Activated T-helper 1 cell treated with anti-CD3 and anti-CD28 coated beads, Interleukin-12 subunit alpha, Interleukin-12 subunit beta, Interleukin-2, Interleukin-4 antibody, amounts not matched to agents 30 ng/mL and 10 ng/mL and 1 ng/mL, durations not matched to agents 14 hours and 24 hours and 36 hours (primary cell): ENCODE measurements at regions of chr11 and their contacts with region 1.

Region 1: GRCh38 chr11:94543695-94544645 is at the start of gene FUT4:
- DNase-seq: peak; percentile 70
- H3K4me3 Mint-ChIP-seq: peak within 1 kb of the TSS; percentile 98
- H3K27ac Mint-ChIP-seq: peak within 1 kb of the TSS; percentile 99
- H3K4me1 Mint-ChIP-seq: peaks cover 45% of the 10 kb centered on the region
- H3K27me3 Mint-ChIP-seq: peaks cover 5% of the 10 kb centered on the region
- total RNA-seq, gene FUT4: 8.0 and 8.6 TPM in 2 replicates

Region 2: GRCh38 chr11:93197380-93198214 is 1346.4 kb before region 1 on chr11 and contains the start of gene SLC36A4:
- intact Hi-C with region 1: loop called (anchors 5 kb)
- DNase-seq: peak; percentile 80
- H3K4me3 Mint-ChIP-seq: peak within 1 kb of the TSS; percentile 97
- H3K27ac Mint-ChIP-seq: peak within 1 kb of the TSS; percentile 97
- H3K4me1 Mint-ChIP-seq: peaks cover 13% of the 10 kb centered on the region
- H3K27me3 Mint-ChIP-seq: peaks cover 13% of the 10 kb centered on the region
- total RNA-seq, gene SLC36A4: 16.9 and 17.1 TPM in 2 replicates

Region 3: GRCh38 chr11:93741094-93741881 is 802.7 kb before region 1 on chr11 and contains the starts of genes C11orf54 and TAF1D:
- intact Hi-C with region 1: loop called (anchors 5 kb)
- DNase-seq: peak; percentile 96
- H3K4me3 Mint-ChIP-seq: peak within 1 kb of the TSS; percentile 100
- H3K27ac Mint-ChIP-seq: peak within 1 kb of the TSS; percentile 99
- H3K4me1 Mint-ChIP-seq: peaks cover 53% of the 10 kb centered on the region
- H3K27me3 Mint-ChIP-seq: no peaks in the 10 kb centered on the region
- total RNA-seq, gene C11orf54: 19.3 and 21.6 TPM in 2 replicates
- total RNA-seq, gene TAF1D: 337 and 345 TPM in 2 replicates

Region 4: DNA sequence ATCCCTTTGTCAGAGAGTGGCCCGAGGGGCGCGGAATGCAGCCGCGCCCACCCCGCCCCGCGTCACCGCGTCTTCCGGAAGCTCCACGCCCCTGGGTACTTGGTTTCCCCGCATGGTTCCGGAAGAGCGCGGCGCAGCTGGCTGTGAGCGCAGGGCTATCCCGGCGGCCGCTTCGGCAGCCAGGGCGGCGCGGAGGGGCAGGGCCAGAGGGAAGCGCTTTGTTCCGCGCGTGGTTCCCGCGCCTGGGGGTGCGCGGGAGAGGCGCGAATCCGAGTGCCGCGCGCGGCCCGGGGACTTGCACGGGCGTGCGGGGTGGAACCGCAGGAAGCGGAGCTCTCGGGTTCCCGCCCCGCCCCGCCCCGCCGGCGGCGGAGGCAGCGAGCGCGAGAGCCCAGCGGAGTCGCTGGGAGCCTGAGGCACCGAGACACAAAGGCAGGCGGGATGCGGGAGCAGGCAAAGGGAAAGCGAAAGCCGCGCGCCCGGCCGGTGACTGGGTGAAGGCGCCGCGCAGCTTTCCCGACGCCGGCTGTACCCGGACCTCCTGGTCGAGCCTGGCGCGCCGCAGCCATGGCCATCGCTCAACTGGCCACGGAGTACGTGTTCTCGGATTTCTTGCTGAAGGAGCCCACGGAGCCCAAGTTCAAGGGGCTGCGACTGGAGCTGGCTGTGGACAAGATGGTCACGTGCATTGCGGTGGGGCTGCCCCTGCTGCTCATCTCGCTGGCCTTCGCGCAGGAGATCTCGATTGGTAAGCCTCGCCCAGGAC is 415.0 kb before region 1 on chr11 and contains the start of gene PANX1:
- intact Hi-C with region 1: loop called (anchors 1 kb)
- DNase-seq: peak; percentile 73
- H3K4me3 Mint-ChIP-seq: no peak within 1 kb of the TSS
- H3K27ac Mint-ChIP-seq: peak within 1 kb of the TSS; percentile 88
- H3K4me1 Mint-ChIP-seq: peaks cover 20% of the 10 kb centered on the region
- H3K27me3 Mint-ChIP-seq: no peaks in the 10 kb centered on the region
- total RNA-seq, gene PANX1: 20.8 and 21.9 TPM in 2 replicates

Region 5: GRCh38 chr11:94519478-94520084 is 24.4 kb before region 1 on chr11:
- intact Hi-C with region 1: loop called (anchors 1 kb)
- DNase-seq: no peak
- H3K4me3 Mint-ChIP-seq: no peak overlapping the region
- H3K27ac Mint-ChIP-seq: no peak overlapping the region
- H3K4me1 Mint-ChIP-seq: no peaks in the 10 kb centered on the region
- H3K27me3 Mint-ChIP-seq: peaks cover 27% of the 10 kb centered on the region

Region 6: GRCh38 chr11:94876645-94877442 is 332.9 kb after region 1 on chr11:
- intact Hi-C with region 1: loop called (anchors 2 kb)
- DNase-seq: peak; percentile 38
- H3K4me3 Mint-ChIP-seq: peak overlapping the region; percentile 45
- H3K27ac Mint-ChIP-seq: peak overlapping the region; percentile 78
- H3K4me1 Mint-ChIP-seq: peaks cover 32% of the 10 kb centered on the region
- H3K27me3 Mint-ChIP-seq: no peaks in the 10 kb centered on the region